GM10248 (cell line): ENCODE measurements at regions of chr19 and their contacts with region 1.

Region 1: GRCh38 chr19:55605207-55605636 is 225 bp upstream of the ZNF865 start:
- DNase-seq: peak; percentile 96
- CTCF ChIP-seq: no peak

Region 2: GRCh38 chr19:55516878-55517620 is 88.2 kb before region 1 on chr19:
- CTCF ChIA-PET with region 1: interaction called, 19 read pairs
- POLR2A ChIA-PET with region 1: no interaction called
- DNase-seq: peak; percentile 100
- CTCF ChIP-seq: peak; percentile 98

Region 3: DNA sequence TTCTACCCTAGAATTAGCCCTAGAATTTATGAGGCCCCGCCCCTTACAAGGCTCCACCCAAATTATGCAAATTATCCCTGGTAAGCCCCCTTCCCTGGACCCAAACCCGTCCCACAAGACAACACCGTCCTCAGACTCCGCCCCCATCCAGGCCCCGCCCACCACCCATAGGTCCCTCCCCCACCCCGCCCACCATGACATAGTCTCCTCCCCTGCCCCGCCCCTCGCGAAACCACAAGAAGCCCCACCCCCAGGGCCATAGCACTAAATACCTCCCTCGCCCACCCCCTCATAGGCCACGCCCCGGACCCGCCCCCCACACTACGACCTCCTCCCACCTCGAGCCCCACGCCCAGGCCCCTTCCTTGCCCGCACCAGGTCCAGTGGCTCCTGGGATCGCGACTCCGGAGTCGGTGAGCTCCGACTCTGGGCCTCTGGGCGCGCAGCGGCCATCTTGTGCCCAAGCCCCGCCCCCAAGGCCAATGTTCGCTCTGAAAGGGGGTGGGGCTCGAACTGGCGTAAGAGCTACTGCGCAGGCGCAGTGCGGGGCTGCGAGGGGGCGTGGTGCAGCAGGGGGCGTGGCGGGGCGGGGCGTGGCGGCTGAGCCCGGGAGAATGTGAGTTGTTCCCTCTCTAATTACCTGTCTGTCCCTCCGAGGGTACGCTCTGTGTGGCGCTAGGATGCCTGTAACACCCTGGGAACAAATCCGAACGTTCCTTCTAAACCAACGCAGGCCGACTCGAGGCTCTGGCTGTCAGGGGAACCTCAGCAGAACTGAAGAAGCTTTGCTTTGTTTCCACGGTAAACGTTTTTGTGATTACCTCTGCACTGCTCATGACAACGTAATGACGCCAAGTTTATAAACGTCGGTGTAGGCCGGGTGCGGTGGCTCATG is 19.1 kb after region 1 on chr19 and contains the start of gene ZNF784:
- CTCF ChIA-PET with region 1: interaction called, 30 read pairs
- POLR2A ChIA-PET with region 1: no interaction called
- DNase-seq: peak; percentile 94
- CTCF ChIP-seq: no peak